ENCODE measurements at regions of chr6 and their contacts with region 1.

Region 1: GRCh38 chr6:17086469-17086868 is 15.4 kb upstream of the STMND1 start:
- DNase-seq: no peak
- H3K4me3 ChIP-seq: no peak overlapping the region
- H3K27ac ChIP-seq: no peak overlapping the region
- H3K4me1 ChIP-seq: peaks cover 0 to 10% (median 2%) of the 10 kb centered on the region in 4 donors
- H3K27me3 ChIP-seq: no peaks in the 10 kb centered on the region
- CTCF ChIP-seq: peak; percentile 75 to 77 (median 76)
- EP300 ChIP-seq: no peak
- POLR2A ChIP-seq: no peak

Region 2: DNA sequence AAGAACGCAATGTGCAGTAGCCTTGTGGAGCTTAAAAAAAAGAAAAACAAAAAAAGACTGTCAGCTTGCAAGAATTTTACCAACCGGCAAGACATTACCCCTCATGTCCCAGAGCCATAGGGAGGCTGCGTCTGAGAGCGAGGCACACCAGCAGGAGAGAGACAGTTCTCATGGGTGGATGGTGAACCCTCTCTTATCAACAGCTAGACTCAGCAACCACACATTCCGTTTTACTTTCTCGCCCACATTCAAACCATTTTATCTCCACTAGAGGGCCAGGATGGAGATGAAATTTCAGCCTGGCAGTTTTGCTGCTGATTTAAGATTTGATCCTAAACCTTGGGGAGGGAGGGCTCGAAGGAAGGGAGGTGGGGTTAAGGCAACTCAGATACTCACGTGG is 572.2 kb before region 1 on chr6:
- intact Hi-C with region 1: loop called (anchors 5 kb)
- DNase-seq: no peak
- H3K4me3 ChIP-seq: no peak overlapping the region
- H3K27ac ChIP-seq: no peak overlapping the region
- H3K4me1 ChIP-seq: peaks cover 21 to 34% (median 29%) of the 10 kb centered on the region in 4 donors
- H3K27me3 ChIP-seq: no peaks in the 10 kb centered on the region
- CTCF ChIP-seq: peak in 1 of 3 experiments; percentile 37
- EP300 ChIP-seq: no peak
- POLR2A ChIP-seq: no peak

Region 3: GRCh38 chr6:16803294-16804200 is 282.9 kb before region 1 on chr6:
- intact Hi-C with region 1: loop called (anchors 10 kb)
- DNase-seq: no peak
- H3K4me3 ChIP-seq: peak overlapping the region; percentile 41 to 44 (median 42)
- H3K27ac ChIP-seq: peak overlapping the region; percentile 73 to 77 (median 74)
- H3K4me1 ChIP-seq: peaks cover 41 to 52% (median 48%) of the 10 kb centered on the region in 4 donors
- H3K27me3 ChIP-seq: no peaks in the 10 kb centered on the region
- CTCF ChIP-seq: no peak
- EP300 ChIP-seq: no peak
- POLR2A ChIP-seq: no peak

Region 4: GRCh38 chr6:16872543-16873235 is 213.8 kb before region 1 on chr6:
- intact Hi-C with region 1: no loop called
- DNase-seq: no peak
- H3K4me3 ChIP-seq: no peak overlapping the region
- H3K27ac ChIP-seq: no peak overlapping the region
- H3K4me1 ChIP-seq: no peaks in the 10 kb centered on the region
- H3K27me3 ChIP-seq: no peaks in the 10 kb centered on the region
- CTCF ChIP-seq: no peak
- EP300 ChIP-seq: no peak
- POLR2A ChIP-seq: no peak

Region 5: GRCh38 chr6:16982807-16983206 is 103.7 kb before region 1 on chr6:
- intact Hi-C with region 1: loop called (anchors 10 kb)
- DNase-seq: no peak
- H3K4me3 ChIP-seq: no peak overlapping the region
- H3K27ac ChIP-seq: no peak overlapping the region
- H3K4me1 ChIP-seq: peaks cover 4 to 20% (median 17%) of the 10 kb centered on the region in 4 donors
- H3K27me3 ChIP-seq: no peaks in the 10 kb centered on the region
- CTCF ChIP-seq: no peak
- EP300 ChIP-seq: no peak
- POLR2A ChIP-seq: no peak

Region 6: GRCh38 chr6:17015144-17015543 is 71.3 kb before region 1 on chr6:
- intact Hi-C with region 1: loop called (anchors 10 kb)
- DNase-seq: peak; percentile 3
- H3K4me3 ChIP-seq: no peak overlapping the region
- H3K27ac ChIP-seq: peak overlapping the region in 1 of 4 donors; percentile 70
- H3K4me1 ChIP-seq: peaks cover 0 to 29% (median 18%) of the 10 kb centered on the region in 4 donors
- H3K27me3 ChIP-seq: no peaks in the 10 kb centered on the region
- CTCF ChIP-seq: no peak
- EP300 ChIP-seq: no peak
- POLR2A ChIP-seq: no peak